ENCODE measurements at regions of chr9 and their contacts with region 1.

Region 1: DNA sequence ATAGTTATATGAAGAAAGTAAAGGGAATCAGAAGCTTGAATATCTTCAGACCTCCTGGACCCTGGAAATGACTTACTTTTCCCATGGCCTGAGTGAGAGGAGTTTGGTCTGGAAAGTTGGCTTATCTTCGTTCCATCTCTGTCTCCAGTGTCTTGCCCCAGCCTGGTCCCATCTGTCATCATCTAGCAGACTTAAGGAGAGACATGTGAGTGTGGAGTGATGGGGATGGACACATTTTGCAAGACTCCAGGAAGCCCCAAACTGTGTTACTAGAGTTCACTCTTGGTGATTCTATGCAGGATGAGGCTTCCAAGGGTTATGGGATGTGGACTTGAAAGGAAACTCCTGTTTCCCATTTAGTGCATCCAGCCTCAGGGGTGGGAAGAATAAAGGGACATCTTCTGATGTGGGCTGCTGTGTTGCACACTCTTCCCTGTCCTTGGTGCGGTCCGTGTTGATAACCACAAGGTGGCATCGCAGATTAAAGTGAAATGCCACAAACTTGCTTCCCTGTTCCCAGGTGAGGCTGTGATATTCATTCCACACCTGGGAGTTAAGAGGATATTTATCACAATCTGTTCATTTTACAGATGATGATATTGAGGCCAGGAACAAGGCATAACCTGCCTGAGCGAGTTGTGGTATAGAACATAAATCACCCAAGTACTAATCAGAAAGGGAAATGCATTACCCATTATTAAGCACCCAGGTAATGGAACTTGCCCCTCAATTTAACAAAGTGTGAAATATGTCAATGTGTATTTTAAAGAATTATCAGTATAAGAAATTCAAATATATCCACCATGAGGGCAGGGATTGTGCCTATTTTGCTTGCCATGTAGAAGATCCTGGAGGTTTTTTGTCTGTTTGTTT is 269.9 kb upstream of the PAPPA start:
- DNase-seq: peak; percentile 66
- H3K4me3 ChIP-seq: no peak overlapping the region
- H3K27ac ChIP-seq: no peak overlapping the region
- H3K4me1 ChIP-seq: no peaks in the 10 kb centered on the region
- H3K27me3 ChIP-seq: no peaks in the 10 kb centered on the region
- CTCF ChIP-seq: peak; percentile 74 to 86

Region 2: GRCh38 chr9:116000748-116001329 is 117.1 kb after region 1 on chr9:
- CTCF ChIA-PET with region 1: no interaction called
- dilution Hi-C with region 1: no loop called
- in situ Hi-C with region 1: no loop called
- intact Hi-C with region 1: loop called (anchors 5 kb)
- DNase-seq: no peak
- H3K4me3 ChIP-seq: no peak overlapping the region
- H3K27ac ChIP-seq: no peak overlapping the region
- H3K4me1 ChIP-seq: peaks cover 34% of the 10 kb centered on the region
- H3K27me3 ChIP-seq: no peaks in the 10 kb centered on the region
- CTCF ChIP-seq: peak; percentile 48 to 61

Region 3: GRCh38 chr9:116149844-116150243 is 266.2 kb after region 1 on chr9:
- CTCF ChIA-PET with region 1: no interaction called
- dilution Hi-C with region 1: no loop called
- in situ Hi-C with region 1: no loop called
- intact Hi-C with region 1: loop called (anchors 1 kb)
- DNase-seq: no peak
- H3K4me3 ChIP-seq: no peak overlapping the region
- H3K27ac ChIP-seq: no peak overlapping the region
- H3K4me1 ChIP-seq: peaks cover 18% of the 10 kb centered on the region
- H3K27me3 ChIP-seq: peaks cover 6% of the 10 kb centered on the region
- CTCF ChIP-seq: peak; percentile 69 to 79

Region 4: GRCh38 chr9:116494815-116495634 is 611.3 kb after region 1 on chr9:
- CTCF ChIA-PET with region 1: no interaction called
- dilution Hi-C with region 1: no loop called
- in situ Hi-C with region 1: no loop called
- intact Hi-C with region 1: loop called (anchors 5 kb)
- DNase-seq: no peak
- H3K4me3 ChIP-seq: no peak overlapping the region
- H3K27ac ChIP-seq: no peak overlapping the region
- H3K4me1 ChIP-seq: no peaks in the 10 kb centered on the region
- H3K27me3 ChIP-seq: no peaks in the 10 kb centered on the region
- CTCF ChIP-seq: peak; percentile 83 to 86

Region 5: DNA sequence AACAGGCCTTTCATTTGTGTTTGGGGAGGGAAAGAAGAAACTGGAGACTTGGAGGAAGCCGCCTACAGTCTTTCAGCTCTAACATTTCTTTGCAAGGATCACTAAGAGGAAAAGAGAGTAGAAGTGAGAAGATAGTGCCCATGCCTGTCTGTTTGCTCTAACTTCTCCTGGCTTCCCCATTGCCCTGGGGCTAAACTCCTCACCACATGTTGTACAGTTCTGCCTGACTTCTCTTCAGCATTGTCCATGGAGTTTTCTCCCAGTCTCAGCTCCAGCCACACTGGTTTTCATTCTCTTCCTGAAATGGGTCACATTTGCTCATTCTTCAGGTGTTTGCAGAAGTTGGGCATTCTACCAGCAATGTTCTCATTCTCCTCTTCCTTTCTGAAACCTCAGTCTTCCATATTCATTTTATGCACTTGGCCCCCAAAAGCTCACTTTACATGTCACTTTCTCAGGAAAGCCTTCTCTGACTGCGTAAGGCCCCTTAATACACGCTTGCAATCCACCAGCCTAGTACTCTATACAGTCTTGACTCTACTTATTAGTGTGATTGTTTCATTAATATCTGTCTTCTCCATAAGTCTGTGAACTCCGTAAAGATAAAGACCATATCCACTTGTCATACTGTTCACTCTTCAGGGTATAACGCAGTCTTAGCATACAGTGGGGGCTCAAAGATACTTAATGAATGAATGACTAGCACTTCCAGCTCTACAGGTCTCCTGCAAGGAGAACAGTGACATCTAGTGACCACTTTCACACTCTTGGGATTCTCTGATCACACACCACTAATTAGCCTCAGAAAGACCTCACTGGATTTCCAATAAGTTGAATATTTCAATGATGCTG is 763.2 kb after region 1 on chr9:
- CTCF ChIA-PET with region 1: no interaction called
- dilution Hi-C with region 1: no loop called
- in situ Hi-C with region 1: loop called in 1 of 2 experiments (anchors 25 kb)
- intact Hi-C with region 1: loop called (anchors 5 kb)
- DNase-seq: peak; percentile 28
- H3K4me3 ChIP-seq: no peak overlapping the region
- H3K27ac ChIP-seq: no peak overlapping the region
- H3K4me1 ChIP-seq: no peaks in the 10 kb centered on the region
- H3K27me3 ChIP-seq: no peaks in the 10 kb centered on the region
- CTCF ChIP-seq: peak; percentile 69 to 81